Mucosa of descending colon (tissue), 3 donors: ENCODE measurements at regions of chr12 and their contacts with region 1.

Region 1: DNA sequence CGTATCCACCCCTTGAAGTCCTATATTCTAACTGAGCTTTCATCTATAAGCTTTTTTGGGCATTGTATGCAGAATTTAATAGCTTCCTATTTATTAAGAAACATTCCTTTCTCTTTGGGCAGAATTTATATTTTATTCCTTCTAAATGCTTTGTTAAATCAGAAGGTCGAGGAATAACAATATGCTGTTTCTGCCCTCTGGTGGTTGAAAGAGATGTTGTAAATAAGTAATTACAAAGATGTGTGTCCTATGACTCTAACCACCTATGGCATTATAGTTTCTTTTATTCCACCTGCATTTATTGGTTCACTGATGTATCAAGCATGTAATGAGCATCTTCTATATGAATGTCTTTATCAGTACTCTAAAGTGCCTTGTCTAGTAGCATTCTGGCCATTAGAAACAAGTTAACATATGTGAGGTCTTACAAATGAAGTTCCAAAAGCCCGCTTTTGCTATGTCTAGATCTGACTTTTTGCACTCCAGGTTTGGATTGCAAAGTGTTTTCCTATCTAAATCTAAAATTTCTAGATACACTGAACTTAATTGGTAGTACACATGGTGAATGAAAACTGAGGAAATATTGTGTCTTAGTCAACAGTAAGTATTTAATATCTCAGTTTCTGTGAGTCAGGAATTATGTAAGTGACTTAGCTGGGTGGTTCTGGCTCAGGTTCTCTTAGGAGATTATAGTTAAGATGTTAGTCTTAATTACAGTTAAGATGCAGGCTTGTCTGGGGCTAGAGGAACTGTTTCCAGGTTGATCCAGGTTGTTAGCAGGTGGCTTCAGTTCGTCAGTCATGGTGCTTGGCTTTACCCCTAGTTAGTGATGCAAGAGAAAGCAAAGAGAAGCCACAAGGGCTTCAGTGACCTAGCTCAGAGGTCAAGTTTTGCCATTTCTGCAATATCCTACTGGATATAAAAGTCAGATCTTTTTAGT is 57.5 kb downstream of the PLEKHA5 start:
- DNase-seq: peak in 1 of 3 donors; percentile 43
- ATAC-seq: peak; percentile 66
- H3K4me3 ChIP-seq: no peak overlapping the region
- H3K4me1 ChIP-seq: no peaks in the 10 kb centered on the region
- CTCF ChIP-seq: peak; percentile 31

Region 2: DNA sequence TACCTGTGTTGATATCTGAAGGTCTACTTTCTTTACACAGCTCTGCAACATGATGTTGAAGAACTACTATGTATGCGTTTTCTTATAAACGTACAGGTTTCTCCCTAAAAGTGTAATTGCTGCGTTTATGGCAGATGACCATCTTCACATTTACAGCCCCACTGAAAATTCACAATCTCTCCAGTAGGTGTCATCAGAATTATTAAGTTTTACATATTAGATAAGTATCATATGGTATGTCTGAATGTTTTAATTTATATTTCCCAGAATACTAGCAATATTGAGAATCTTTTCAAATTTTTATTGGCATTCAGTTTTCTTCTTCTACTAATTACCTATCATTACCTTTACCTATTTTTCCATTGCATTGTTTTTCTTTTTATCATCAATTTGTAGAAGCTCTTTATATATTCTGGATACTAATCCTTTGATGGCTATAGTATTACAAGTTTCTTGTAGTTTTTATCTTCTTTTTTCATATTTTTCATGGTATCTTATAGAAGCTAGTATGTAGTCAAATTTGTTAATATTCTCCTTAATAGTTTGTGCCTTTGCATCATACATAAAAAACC is 325.6 kb before region 1 on chr12:
- intact Hi-C with region 1: loop called in 1 of 2 experiments (anchors 5 kb)
- DNase-seq: peak in 1 of 3 donors; percentile 20
- ATAC-seq: no peak
- H3K4me3 ChIP-seq: no peak overlapping the region
- H3K4me1 ChIP-seq: no peaks in the 10 kb centered on the region
- CTCF ChIP-seq: peak; percentile 25

Region 3: GRCh38 chr12:19031032-19031431 is 156.0 kb before region 1 on chr12:
- intact Hi-C with region 1: no loop called
- DNase-seq: no peak
- ATAC-seq: no peak
- H3K4me3 ChIP-seq: no peak overlapping the region
- H3K4me1 ChIP-seq: no peaks in the 10 kb centered on the region
- CTCF ChIP-seq: no peak

Region 4: DNA sequence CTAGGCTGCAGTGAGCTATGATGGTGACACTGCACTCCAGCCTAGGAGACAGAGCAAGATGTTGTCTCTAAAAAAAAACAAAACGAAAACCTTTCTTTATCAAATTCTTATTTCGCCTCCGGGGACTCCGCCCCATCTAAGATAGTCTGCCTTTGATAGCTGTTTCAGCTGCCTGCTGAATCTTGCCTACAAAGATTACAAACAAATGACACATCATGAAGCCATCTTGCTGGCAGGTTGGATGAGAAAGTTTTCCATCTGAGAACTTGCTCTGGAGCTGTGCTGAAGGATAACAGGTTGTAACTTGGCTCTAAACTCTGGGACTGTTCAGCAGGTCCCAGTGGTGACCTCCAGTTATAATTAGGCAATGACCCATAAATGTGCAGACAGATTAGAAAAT is 210.5 kb after region 1 on chr12:
- intact Hi-C with region 1: no loop called
- DNase-seq: no peak
- ATAC-seq: no peak
- H3K4me3 ChIP-seq: no peak overlapping the region
- H3K4me1 ChIP-seq: no peaks in the 10 kb centered on the region
- CTCF ChIP-seq: no peak